A549 (cell line): ENCODE measurements at regions of chr10 and their contacts with region 1.

Region 1: GRCh38 chr10:71383972-71384687 is 12.6 kb upstream of the CDH23 start:
- DNase-seq: peak; percentile 58 to 78
- ATAC-seq: peak; percentile 91 to 98
- H3K4me3 ChIP-seq: no peak overlapping the region
- H3K27ac ChIP-seq: no peak overlapping the region
- H3K4me1 ChIP-seq: no peaks in the 10 kb centered on the region
- CTCF ChIP-seq: peak; percentile 86
- EP300 ChIP-seq: no peak
- POLR2A ChIP-seq: no peak
- RAD21 ChIP-seq: peak; percentile 85 to 89

Region 2: GRCh38 chr10:71351628-71352319 is 32.4 kb before region 1 on chr10:
- CTCF ChIA-PET with region 1: interaction called, 37 read pairs
- POLR2A ChIA-PET with region 1: no interaction called
- DNase-seq: no peak
- ATAC-seq: no peak
- H3K4me3 ChIP-seq: no peak overlapping the region
- H3K27ac ChIP-seq: no peak overlapping the region
- H3K4me1 ChIP-seq: peaks cover 30% of the 10 kb centered on the region
- CTCF ChIP-seq: no peak
- EP300 ChIP-seq: no peak
- POLR2A ChIP-seq: no peak
- RAD21 ChIP-seq: no peak

Region 3: GRCh38 chr10:71359364-71360046 is 24.6 kb before region 1 on chr10:
- CTCF ChIA-PET with region 1: interaction called, 37 read pairs
- POLR2A ChIA-PET with region 1: no interaction called
- DNase-seq: no peak
- ATAC-seq: no peak
- H3K4me3 ChIP-seq: no peak overlapping the region
- H3K27ac ChIP-seq: no peak overlapping the region
- H3K4me1 ChIP-seq: peaks cover 8% of the 10 kb centered on the region
- CTCF ChIP-seq: no peak
- EP300 ChIP-seq: no peak
- POLR2A ChIP-seq: no peak
- RAD21 ChIP-seq: no peak

Region 4: DNA sequence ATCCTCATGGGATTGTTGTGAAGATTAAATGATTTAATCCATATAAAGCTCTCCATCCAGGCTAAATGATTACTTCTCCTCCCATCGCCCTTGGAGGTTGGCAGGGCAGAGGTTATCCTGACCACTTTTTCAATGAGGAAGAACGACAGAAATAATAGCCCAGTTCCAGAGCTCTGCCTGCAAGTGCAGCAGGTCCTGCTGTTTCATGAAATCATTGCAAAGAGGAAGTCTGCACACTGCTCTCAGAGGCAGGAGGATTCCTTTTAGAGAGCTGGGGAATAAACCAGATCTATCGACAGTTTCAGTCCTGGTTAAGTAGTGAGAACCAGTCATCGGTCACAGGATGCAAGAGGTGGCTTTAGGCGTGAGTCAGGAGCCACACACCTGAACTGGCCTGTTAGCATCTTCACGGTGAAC is 12.4 kb before region 1 on chr10:
- CTCF ChIA-PET with region 1: interaction called, 79 read pairs
- POLR2A ChIA-PET with region 1: no interaction called
- DNase-seq: no peak
- ATAC-seq: no peak
- H3K4me3 ChIP-seq: no peak overlapping the region
- H3K27ac ChIP-seq: no peak overlapping the region
- H3K4me1 ChIP-seq: peaks cover 7% of the 10 kb centered on the region
- CTCF ChIP-seq: no peak
- EP300 ChIP-seq: no peak
- POLR2A ChIP-seq: no peak
- RAD21 ChIP-seq: no peak

Region 5: DNA sequence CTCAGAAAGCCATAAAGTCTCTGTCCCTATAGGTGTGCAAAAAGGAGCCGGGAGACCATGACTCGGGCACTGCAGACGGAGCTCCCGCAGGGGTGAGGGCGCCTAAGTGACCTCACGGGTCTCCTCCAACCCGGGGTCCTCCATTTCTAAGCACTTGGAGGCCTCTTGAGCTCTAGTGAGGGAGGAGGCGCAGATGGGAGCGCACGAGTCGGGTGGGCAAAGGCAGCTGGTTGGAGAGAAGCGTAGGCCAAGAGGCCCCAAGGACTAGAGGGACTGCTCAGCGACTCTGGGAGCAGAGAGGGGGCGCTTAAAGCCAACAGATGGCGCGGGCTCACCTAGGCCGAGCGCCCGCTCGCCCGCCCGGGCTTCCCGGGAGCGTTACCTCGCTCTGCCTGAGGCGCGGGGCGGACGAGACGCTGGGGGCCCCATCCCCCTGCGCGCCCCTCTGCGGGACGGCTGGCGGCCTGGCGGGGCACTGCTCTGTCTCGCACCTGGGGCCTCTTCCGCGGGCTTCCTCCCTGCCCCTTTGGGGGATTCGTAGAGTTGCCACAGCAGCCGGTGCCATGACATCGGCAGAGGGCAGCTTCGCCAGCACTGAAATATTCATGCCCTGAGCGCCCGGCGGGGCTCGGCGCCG is 12.1 kb after region 1 on chr10:
- CTCF ChIA-PET with region 1: interaction called, 88 read pairs
- POLR2A ChIA-PET with region 1: interaction called, 3 read pairs
- DNase-seq: peak; percentile 75 to 76
- ATAC-seq: peak; percentile 86 to 94
- H3K4me3 ChIP-seq: peak overlapping the region; percentile 58
- H3K27ac ChIP-seq: peak overlapping the region; percentile 71 to 91
- H3K4me1 ChIP-seq: peaks cover 7% of the 10 kb centered on the region; the same call in 1 of the 3 replicates
- CTCF ChIP-seq: peak; percentile 77
- EP300 ChIP-seq: no peak
- POLR2A ChIP-seq: no peak
- RAD21 ChIP-seq: peak; percentile 80 to 92

Region 6: GRCh38 chr10:71812016-71812912 is 428.1 kb after region 1 on chr10:
- CTCF ChIA-PET with region 1: interaction called, 13 read pairs
- POLR2A ChIA-PET with region 1: no interaction called
- DNase-seq: peak; percentile 61 to 82
- ATAC-seq: peak; percentile 61 to 89
- H3K4me3 ChIP-seq: no peak overlapping the region
- H3K27ac ChIP-seq: peak overlapping the region in 1 of 2 experiments; percentile 43; a peak in 3 of 6 replicates
- H3K4me1 ChIP-seq: peaks cover 18% of the 10 kb centered on the region; the same call in 2 of the 3 replicates
- CTCF ChIP-seq: peak; percentile 87
- EP300 ChIP-seq: no peak
- POLR2A ChIP-seq: no peak
- RAD21 ChIP-seq: peak; percentile 89 to 91